ENCODE measurements at regions of chr7 and their contacts with region 1.

Region 1: GRCh38 chr7:85750454-85750949 is 563.6 kb upstream of the SEMA3D start:
- DNase-seq: peak; percentile 44
- H3K4me3 ChIP-seq: no peak overlapping the region
- H3K27ac ChIP-seq: no peak overlapping the region
- H3K4me1 ChIP-seq: no peaks in the 10 kb centered on the region
- H3K27me3 ChIP-seq: peaks cover 2 to 5% of the 10 kb centered on the region in 2 experiments
- CTCF ChIP-seq: peak; percentile 74 to 79
- POLR2A ChIP-seq: no peak

Region 2: DNA sequence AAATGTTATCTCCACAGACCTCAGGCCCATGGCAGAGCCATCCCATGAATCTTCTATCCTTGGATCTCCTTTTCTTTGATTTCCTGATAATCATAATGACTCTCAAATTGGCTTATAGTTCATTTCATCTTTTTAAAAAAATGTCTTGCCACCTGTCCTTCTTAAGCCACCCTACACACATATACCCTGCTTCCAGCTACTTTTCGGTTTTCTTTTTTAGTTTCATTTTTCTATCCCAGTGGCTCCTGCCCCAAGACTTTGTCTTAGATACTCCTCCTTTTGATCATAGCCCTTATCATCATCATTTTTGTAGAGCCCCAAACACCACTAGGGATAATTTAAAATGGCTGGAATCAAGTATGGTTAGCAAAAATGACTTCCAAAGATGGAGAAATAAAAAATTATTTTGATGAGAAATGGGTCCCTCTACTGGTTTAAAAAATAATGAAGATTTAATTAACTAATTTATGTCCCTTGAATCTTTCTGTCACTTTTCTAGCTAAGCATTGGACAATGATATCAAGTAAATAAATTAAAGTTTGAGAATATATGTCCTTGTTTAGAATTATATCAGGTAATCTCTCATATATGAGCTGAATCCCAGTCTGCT is 286.4 kb before region 1 on chr7:
- CTCF ChIA-PET with region 1: interaction called, 3 read pairs
- POLR2A ChIA-PET with region 1: no interaction called
- dilution Hi-C with region 1: no loop called
- intact Hi-C with region 1: loop called (anchors 2 kb)
- DNase-seq: peak; percentile 13
- H3K4me3 ChIP-seq: no peak overlapping the region
- H3K27ac ChIP-seq: no peak overlapping the region
- H3K4me1 ChIP-seq: no peaks in the 10 kb centered on the region
- H3K27me3 ChIP-seq: no peaks in the 10 kb centered on the region
- CTCF ChIP-seq: no peak
- POLR2A ChIP-seq: no peak

Region 3: DNA sequence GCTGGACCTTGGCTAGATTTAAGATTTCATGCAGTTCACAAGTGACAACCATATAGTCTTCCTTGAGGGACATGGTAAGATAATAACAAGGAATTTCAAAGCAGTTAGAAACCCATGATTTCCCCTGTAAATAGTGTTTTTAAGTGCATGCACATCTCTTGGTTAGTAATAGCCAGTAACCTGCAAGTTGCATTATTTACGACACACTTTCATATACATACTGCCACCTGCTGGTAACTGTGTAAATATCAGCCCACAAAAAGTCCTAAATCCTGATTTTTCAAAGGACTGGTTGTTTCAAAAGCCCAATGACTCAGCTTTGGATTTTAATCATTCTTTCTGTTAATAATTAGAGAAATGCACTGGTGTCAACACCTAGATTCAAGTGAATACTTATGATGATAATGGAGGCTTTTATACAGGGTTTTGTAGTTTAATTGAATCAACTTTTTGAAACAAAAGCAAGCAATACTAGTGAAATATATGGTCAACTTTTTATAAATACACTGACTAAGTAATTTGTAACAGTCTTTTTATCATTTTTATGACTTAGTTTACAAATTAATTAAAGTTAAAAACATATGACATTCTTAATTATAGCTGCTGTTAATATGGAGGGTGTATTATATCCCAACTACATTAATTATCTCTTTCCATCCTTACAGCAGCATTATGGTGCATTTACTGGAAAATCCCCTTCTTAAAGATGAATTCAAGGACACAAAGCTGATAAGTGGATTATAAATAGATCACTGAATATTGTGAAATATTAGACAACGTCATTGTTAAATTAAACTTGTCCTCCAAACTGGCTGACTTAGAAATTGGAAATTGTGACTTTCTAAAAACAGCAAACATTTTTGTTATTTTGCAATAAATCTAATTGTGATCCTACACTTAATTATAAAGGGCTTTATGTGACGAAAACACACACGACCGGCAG is 196.0 kb before region 1 on chr7:
- CTCF ChIA-PET with region 1: interaction called, 6 read pairs
- POLR2A ChIA-PET with region 1: no interaction called
- dilution Hi-C with region 1: no loop called
- intact Hi-C with region 1: loop called (anchors 2 kb)
- DNase-seq: peak; percentile 63
- H3K4me3 ChIP-seq: no peak overlapping the region
- H3K27ac ChIP-seq: no peak overlapping the region
- H3K4me1 ChIP-seq: no peaks in the 10 kb centered on the region
- H3K27me3 ChIP-seq: no peaks in the 10 kb centered on the region
- CTCF ChIP-seq: peak; percentile 44 to 49
- POLR2A ChIP-seq: no peak

Region 4: DNA sequence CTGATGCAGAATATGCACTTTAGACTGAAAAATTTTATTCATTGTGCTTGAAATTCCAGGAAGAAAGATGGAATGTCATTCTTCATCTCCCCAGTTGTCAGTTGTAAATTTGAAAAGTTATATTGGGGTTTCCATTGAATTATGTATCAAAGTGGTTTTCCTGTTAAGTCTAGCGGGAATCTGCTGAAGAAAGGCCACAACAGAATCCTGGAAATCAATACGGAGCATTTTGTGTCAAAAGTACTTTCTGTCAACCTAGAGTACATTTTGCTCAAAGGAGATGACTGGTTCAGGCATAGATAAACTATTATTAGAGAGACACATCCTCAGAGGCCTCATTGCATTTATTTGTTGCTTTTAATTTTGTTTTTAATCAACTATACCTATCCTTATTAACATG is 25.5 kb before region 1 on chr7:
- CTCF ChIA-PET with region 1: no interaction called
- POLR2A ChIA-PET with region 1: no interaction called
- dilution Hi-C with region 1: no loop called
- intact Hi-C with region 1: no loop called
- DNase-seq: no peak
- H3K4me3 ChIP-seq: no peak overlapping the region
- H3K27ac ChIP-seq: no peak overlapping the region
- H3K4me1 ChIP-seq: no peaks in the 10 kb centered on the region
- H3K27me3 ChIP-seq: no peaks in the 10 kb centered on the region
- CTCF ChIP-seq: no peak
- POLR2A ChIP-seq: no peak

Measured in endothelial cell of umbilical vein (primary cell).